ENCODE measurements at regions of chr1 and their contacts with region 1.

Region 1: DNA sequence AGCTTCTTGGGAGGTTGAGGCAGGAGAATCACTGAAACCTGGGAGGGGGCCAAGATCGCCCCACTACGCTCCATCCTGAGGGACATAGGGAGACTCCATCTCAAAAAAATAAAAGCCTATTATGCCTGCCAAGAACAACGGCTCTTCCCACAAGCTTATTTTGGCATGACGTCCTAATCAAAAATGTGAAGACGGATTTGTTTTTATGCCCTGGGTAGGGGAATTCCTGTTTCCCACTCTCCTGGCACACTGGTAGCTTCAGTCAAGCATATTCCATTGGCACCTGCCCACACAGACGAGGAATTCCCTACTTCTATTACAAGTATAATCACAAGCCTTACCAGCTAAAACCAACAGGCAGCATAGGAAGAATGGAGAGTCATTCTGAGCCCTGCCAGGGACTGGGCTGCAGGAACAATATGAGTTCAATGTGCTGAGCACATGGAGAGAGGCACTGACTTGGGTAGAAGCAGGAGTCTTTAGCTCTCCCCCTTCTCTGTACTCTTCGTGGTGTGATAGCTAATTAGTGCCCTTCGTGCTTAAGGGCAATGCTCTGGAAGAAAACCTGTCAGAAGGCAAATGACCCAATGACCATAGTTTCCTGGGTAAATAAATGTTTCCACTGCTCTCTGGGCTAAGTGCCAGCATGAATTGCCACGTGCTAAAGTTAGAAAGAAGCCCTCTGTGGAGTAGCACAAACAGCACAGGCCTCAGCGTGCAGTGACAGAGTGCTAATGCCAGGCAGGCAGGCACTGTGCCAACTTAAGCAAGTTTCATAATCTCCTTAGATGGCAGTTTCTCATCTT is 16.8 kb downstream of the TNFSF4 start:
- DNase-seq: peak; percentile 63
- ATAC-seq: peak; percentile 59
- H3K4me3 ChIP-seq: no peak overlapping the region
- H3K27ac ChIP-seq: no peak overlapping the region
- H3K4me1 ChIP-seq: no peaks in the 10 kb centered on the region
- H3K27me3 ChIP-seq: no peaks in the 10 kb centered on the region
- CTCF ChIP-seq: no peak
- EP300 ChIP-seq: no peak
- POLR2A ChIP-seq: no peak
- RAD21 ChIP-seq: no peak

Region 2: GRCh38 chr1:172895050-172895460 is 295.2 kb before region 1 on chr1:
- CTCF ChIA-PET with region 1: no interaction called
- POLR2A ChIA-PET with region 1: no interaction called
- RAD21 ChIA-PET with region 1: no interaction called
- SMC1A ChIA-PET with region 1: no interaction called
- in situ Hi-C with region 1: no loop called
- intact Hi-C with region 1: loop called (anchors 10 kb)
- DNase-seq: no peak
- ATAC-seq: peak; percentile 83
- H3K4me3 ChIP-seq: no peak overlapping the region
- H3K27ac ChIP-seq: no peak overlapping the region
- H3K4me1 ChIP-seq: peaks cover 11% of the 10 kb centered on the region; the same call in 1 of the 2 replicates
- H3K27me3 ChIP-seq: peaks cover 0 to 1% of the 10 kb centered on the region in 2 experiments; a peak in 1 of 4 replicates
- CTCF ChIP-seq: no peak
- EP300 ChIP-seq: no peak
- POLR2A ChIP-seq: no peak
- RAD21 ChIP-seq: no peak

Measured in GM12878 (cell line).